Activated B cell treated with CpG ODN at 0.5 μM for 24 hours (primary cell): ENCODE measurements at regions of chr14 and their contacts with region 1.

Region 1: DNA sequence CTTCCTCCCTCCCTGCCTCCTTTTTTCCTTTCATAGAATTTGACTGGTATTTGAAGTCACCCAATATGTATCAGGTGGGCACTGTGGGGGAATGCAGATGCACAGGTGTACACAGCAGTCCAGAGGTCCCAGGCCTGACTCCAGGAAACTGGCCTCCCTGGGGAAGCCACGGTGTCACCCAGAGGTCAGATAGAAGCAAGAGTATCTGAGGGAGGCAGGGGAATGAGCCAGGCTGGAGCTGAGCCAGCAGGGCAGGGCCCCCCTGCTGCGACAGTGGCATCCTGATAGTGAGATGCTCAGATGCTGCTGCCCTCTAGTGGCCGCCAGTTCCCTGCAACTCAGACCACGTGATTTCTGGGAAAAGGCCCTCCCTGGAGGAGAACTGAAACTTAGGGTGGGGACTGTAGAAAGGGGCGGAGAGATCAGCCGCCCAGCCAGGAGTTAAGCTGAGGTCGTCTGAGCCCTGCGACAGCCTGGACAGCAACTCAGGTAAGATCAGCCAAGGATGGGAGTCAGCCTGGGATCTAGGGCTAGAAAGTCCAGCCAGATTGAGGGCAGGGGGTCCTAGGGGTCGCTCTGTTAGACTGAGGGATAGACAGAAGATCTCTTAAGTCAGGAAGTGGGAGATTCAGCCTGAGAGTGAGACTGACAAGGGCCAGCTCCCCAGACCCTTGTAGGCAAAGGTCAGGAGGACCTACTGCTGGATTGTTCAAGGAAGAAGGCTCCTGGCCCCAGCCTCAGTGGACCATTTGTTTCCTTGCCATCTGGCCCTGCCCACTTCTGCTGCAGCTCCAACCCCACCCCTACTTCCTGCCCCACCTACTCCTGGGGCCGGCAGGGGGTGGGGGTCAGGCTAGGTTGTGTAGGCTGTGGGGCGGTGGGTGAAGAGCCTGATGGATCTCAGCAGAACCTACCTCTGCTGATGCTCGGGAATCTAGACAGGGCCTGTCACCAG is at the start of gene IRF9:
- DNase-seq: peak; percentile 90
- ATAC-seq: peak; percentile 92
- H3K4me3 Mint-ChIP-seq: peak within 1 kb of the TSS; percentile 98
- H3K27ac Mint-ChIP-seq: peak within 1 kb of the TSS; percentile 95
- H3K4me1 Mint-ChIP-seq: peaks cover 45% of the 10 kb centered on the region
- H3K27me3 Mint-ChIP-seq: no peaks in the 10 kb centered on the region
- CTCF ChIP-seq: no peak
- total RNA-seq, gene IRF9: 221 and 229 TPM in 2 replicates

Region 2: GRCh38 chr14:24080888-24081738 is 80.0 kb before region 1 on chr14:
- CTCF ChIA-PET with region 1: no interaction called
- POLR2A ChIA-PET with region 1: interaction called, 14 read pairs
- intact Hi-C with region 1: no loop called
- DNase-seq: peak; percentile 75
- ATAC-seq: peak; percentile 95
- H3K4me3 Mint-ChIP-seq: peak overlapping the region; percentile 82
- H3K27ac Mint-ChIP-seq: peak overlapping the region; percentile 83
- H3K4me1 Mint-ChIP-seq: peaks cover 32% of the 10 kb centered on the region
- H3K27me3 Mint-ChIP-seq: no peaks in the 10 kb centered on the region
- CTCF ChIP-seq: no peak

Region 3: DNA sequence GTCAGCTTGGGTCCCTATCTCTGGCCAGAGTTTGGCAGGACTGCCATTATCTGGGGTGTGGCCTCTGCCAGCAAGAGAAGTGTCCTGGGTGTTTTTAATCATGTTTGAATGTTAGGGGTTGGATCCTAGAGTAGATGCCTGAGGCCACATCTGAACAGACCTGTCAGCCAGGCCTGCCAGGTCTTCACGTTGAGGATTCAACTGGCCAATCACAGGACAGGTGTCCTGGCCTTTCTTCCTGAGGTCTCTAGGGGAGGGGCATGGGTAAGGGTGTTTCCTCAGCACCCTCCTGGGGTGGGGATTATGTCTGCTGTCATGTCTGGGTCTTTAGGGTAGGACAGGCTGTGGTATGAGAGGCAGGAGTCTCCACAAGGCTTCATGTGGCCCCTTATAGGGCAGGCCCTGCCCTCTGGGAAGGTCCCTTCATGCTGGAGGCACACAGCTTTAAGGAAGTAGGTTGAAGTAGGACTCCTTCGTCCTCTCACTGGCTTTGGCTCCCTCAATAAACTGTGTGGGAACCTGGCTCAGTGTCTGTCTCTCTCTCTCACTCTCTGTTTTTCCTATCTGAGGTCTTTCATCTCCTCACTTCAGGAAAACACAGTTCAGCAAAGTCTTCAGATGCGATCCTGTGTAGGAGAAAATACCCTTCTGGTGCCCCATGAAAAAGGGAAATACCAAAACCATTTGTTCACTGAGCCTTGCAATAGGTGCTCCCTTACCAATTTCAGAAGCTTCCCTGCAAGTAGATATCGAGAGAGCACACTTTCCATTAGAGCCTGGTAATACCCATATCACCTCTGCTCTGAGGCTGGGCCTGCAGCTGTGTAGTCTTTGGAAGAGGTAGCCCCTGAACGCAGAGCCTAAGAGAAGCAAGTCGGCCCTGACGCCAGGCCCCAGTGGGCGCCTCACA is 37.4 kb before region 1 on chr14:
- CTCF ChIA-PET with region 1: interaction called, 3 read pairs
- POLR2A ChIA-PET with region 1: interaction called, 14 read pairs
- intact Hi-C with region 1: no loop called
- DNase-seq: no peak
- ATAC-seq: peak; percentile 83
- H3K4me3 Mint-ChIP-seq: peak overlapping the region; percentile 52
- H3K27ac Mint-ChIP-seq: peak overlapping the region; percentile 93
- H3K4me1 Mint-ChIP-seq: peaks cover 38% of the 10 kb centered on the region
- H3K27me3 Mint-ChIP-seq: no peaks in the 10 kb centered on the region
- CTCF ChIP-seq: no peak

Region 4: DNA sequence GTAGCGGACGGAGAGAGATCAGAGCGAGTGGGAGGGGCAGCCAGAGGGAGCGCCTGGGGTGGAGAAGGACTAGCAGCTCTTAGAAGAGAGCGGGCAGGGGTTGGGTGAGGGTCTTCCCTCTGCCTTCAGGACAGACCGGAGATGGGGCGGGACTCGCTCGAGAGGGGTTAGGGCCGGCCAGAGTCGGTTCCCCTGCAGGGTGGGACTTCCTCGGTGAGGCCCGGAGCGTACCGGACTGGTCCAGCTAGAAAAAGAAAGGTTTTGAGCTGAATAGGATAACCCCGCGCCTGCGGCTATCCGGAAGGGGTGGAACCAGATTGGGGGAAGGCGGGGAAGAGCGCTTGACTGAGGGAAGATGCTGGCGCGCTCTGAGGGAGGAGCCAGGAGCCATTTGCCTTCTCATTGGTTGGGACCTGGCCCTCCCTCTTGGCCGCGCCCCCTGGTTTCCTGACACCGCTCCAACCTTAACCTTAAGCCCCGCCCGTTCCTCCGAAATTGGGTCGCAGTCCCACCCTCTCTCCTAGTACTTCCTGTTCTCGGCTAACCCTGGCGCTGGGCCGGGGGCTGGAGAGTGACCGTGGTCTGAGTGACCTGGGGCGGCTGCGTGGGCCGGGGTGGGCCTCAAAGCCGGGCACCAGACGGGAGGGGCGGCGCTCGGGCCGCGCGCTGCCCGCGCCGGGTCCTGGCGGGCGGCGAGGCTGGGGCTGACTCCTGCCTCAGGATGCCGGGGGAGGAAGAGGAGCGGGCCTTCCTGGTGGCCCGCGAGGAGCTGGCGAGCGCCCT is 14.0 kb before region 1 on chr14 and contains the start of gene RNF31:
- CTCF ChIA-PET with region 1: interaction called, 45 read pairs
- POLR2A ChIA-PET with region 1: interaction called, 67 read pairs
- intact Hi-C with region 1: loop called (anchors 1 kb)
- DNase-seq: peak; percentile 91
- ATAC-seq: peak; percentile 85
- H3K4me3 Mint-ChIP-seq: peak within 1 kb of the TSS; percentile 97
- H3K27ac Mint-ChIP-seq: peak within 1 kb of the TSS; percentile 94
- H3K4me1 Mint-ChIP-seq: peaks cover 51% of the 10 kb centered on the region
- H3K27me3 Mint-ChIP-seq: no peaks in the 10 kb centered on the region
- CTCF ChIP-seq: no peak
- total RNA-seq, gene RNF31: 87.4 and 99.8 TPM in 2 replicates

Region 5: GRCh38 chr14:24188251-24189058 is 27.3 kb after region 1 on chr14 and contains the start of gene IPO4:
- CTCF ChIA-PET with region 1: interaction called, 11 read pairs
- POLR2A ChIA-PET with region 1: interaction called, 28 read pairs
- intact Hi-C with region 1: loop called (anchors 1 kb)
- DNase-seq: peak; percentile 81
- ATAC-seq: peak; percentile 92
- H3K4me3 Mint-ChIP-seq: peak within 1 kb of the TSS; percentile 91
- H3K27ac Mint-ChIP-seq: peak within 1 kb of the TSS; percentile 87
- H3K4me1 Mint-ChIP-seq: peaks cover 32% of the 10 kb centered on the region
- H3K27me3 Mint-ChIP-seq: no peaks in the 10 kb centered on the region
- CTCF ChIP-seq: no peak
- total RNA-seq, gene IPO4: 76.4 and 80.3 TPM in 2 replicates

Region 6: DNA sequence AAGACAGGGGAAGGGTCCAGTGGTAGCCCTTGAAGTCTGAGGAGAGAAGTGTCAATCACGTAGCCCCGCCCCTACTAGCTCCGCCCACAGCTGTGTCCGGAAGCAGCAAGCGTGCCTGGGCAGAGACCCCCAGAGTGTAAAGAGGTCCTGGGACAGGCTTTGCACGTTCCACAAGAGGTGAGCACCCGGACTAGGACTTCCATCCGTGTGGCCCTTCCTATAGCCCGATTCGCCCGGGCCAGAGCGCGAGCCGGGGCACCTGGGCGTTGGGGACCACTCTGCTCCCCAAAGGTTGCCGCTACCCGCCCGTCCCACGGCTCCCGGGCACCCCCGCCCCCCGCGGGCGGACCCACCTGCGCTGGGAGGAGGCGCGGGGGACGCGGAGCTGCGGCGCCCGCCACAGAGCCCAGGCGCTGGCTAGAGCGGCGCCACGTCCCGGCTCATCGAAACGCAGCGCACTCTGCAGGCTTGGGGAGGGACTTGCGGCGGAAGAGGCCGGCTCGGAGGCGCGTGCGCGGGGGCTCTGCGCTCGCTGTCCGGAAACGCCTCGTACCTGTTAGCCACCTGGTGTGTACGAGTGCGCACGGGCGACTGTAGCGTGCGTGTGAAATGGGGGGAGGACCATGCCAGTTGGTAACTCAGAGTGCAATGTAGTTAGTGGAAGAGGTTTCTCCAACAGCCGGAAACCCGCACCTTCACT is 110.2 kb after region 1 on chr14 and contains the start of gene RABGGTA:
- CTCF ChIA-PET with region 1: no interaction called
- POLR2A ChIA-PET with region 1: interaction called, 10 read pairs
- intact Hi-C with region 1: no loop called
- DNase-seq: peak; percentile 88
- ATAC-seq: peak; percentile 83
- H3K4me3 Mint-ChIP-seq: peak within 1 kb of the TSS; percentile 90
- H3K27ac Mint-ChIP-seq: peak within 1 kb of the TSS; percentile 96
- H3K4me1 Mint-ChIP-seq: peaks cover 57% of the 10 kb centered on the region
- H3K27me3 Mint-ChIP-seq: no peaks in the 10 kb centered on the region
- CTCF ChIP-seq: no peak
- total RNA-seq, gene RABGGTA: 53.6 and 70.5 TPM in 2 replicates

Region 7: GRCh38 chr14:24678801-24679247 is 517.7 kb after region 1 on chr14:
- CTCF ChIA-PET with region 1: no interaction called
- POLR2A ChIA-PET with region 1: no interaction called
- intact Hi-C with region 1: no loop called
- DNase-seq: peak; percentile 43
- ATAC-seq: peak; percentile 91
- H3K4me3 Mint-ChIP-seq: peak overlapping the region; percentile 75
- H3K27ac Mint-ChIP-seq: peak overlapping the region; percentile 78
- H3K4me1 Mint-ChIP-seq: peaks cover 51% of the 10 kb centered on the region
- H3K27me3 Mint-ChIP-seq: no peaks in the 10 kb centered on the region
- CTCF ChIP-seq: peak; percentile 99